ENCODE measurements at regions of chr7 and their contacts with region 1.

Region 1: DNA sequence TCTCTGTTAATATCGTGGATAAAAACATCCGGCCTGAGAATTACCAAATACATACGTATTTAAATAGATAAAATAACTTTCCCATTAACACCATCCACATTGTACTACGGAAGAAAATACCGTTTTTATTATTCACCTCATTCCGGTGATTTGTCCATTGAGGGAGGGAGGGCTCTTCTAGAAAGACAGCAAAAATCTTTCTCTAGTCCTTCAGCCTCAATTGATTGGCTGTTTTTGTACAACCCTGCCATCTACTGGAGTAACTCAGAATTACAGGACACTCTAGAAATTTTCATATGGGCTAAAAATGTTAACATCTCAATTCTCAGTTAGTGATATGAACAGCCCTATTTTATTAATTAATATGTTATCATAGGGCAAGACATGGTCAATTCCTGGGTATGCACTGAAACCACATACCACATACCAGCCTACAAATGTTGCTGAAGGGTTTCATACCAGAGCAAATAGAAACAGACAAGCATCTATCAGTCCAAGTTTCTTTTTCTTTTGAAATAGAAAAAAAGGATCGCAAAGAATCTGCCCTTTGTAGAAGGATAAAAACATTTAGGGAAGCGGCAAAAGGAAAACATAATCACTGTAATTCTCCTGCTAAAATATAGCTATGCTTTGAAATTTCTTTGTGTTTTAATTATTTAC is 55.8 kb upstream of the CDCA7L start:
- DNase-seq: peak; percentile 86
- H3K4me3 ChIP-seq: no peak overlapping the region
- H3K27ac ChIP-seq: peak overlapping the region; percentile 59
- H3K4me1 ChIP-seq: peaks cover 16% of the 10 kb centered on the region
- H3K27me3 ChIP-seq: no peaks in the 10 kb centered on the region
- CTCF ChIP-seq: peak; percentile 51 to 60
- POLR2A ChIP-seq: no peak

Region 2: DNA sequence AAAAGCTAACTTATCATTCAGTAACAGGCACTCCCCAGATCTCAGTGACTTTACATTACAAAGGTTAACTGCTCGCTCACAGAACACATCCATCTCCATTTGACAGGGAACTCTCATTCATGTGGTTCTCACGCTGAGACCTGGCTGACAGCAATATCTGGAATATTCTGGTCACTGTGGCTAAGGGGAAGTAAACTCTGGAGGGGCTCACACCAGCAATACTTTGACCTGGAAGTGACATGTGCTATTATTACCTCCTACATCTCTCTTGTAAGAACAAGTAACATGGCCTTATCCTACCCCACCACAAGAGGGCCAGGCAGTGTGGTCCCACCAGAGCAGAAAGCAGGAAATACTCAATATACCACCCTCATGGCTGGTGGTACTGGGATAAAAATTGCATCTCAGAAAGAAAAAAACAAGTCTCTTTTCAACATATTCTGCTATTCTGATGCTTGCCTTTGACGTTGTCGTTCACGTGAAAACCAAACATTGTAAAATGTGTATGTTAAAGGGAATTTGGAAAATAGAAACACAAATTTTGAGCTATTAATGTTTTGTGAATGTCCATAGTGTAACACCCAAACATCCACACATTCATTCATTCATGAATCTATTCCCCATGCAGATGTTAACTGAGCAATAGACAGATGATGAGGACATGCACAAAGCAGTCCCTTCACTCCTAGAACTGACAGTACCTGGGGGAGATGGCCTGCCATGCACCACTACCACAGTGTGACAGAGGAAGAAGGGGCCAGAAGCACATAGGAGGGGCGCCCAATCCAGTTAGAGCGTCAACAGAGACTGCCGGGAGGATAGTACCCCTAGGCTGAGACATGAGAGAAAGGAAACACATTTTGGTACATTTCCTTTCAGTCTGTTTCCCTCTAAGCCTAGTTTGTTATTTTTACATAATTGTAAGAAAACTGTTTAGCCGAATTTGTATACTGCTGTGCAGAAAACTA is 739.6 kb before region 1 on chr7:
- CTCF ChIA-PET with region 1: no interaction called
- POLR2A ChIA-PET with region 1: no interaction called
- dilution Hi-C with region 1: no loop called
- intact Hi-C with region 1: loop called (anchors 1 kb)
- DNase-seq: peak; percentile 67
- H3K4me3 ChIP-seq: no peak overlapping the region
- H3K27ac ChIP-seq: no peak overlapping the region
- H3K4me1 ChIP-seq: peaks cover 2% of the 10 kb centered on the region
- H3K27me3 ChIP-seq: no peaks in the 10 kb centered on the region
- CTCF ChIP-seq: peak; percentile 67 to 68
- POLR2A ChIP-seq: no peak

Region 3: GRCh38 chr7:21507626-21508343 is 493.7 kb before region 1 on chr7:
- CTCF ChIA-PET with region 1: interaction called, 5 read pairs
- POLR2A ChIA-PET with region 1: no interaction called
- dilution Hi-C with region 1: no loop called
- intact Hi-C with region 1: loop called (anchors 1 kb)
- DNase-seq: peak; percentile 52
- H3K4me3 ChIP-seq: no peak overlapping the region
- H3K27ac ChIP-seq: no peak overlapping the region
- H3K4me1 ChIP-seq: no peaks in the 10 kb centered on the region
- H3K27me3 ChIP-seq: no peaks in the 10 kb centered on the region
- CTCF ChIP-seq: peak; percentile 76
- POLR2A ChIP-seq: no peak

Region 4: DNA sequence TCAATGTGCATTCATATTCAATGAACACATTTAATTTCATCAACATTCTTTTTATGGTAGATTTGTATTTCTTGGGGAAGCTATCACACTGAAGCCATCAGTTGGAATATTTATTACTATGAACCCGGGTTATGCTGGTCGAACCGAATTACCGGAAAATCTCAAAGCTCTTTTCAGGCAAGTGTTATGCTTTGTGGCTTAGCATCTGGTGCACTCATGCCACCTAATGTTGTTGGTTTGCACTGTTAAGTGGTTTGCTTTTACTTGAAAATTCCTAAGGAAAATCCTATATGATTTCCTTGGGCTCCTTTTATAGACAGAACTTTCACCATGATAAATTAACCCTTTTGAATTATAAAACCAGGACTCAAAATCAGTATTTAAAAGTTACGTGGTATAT is 310.8 kb before region 1 on chr7:
- CTCF ChIA-PET with region 1: no interaction called
- POLR2A ChIA-PET with region 1: no interaction called
- dilution Hi-C with region 1: no loop called
- intact Hi-C with region 1: loop called (anchors 1 kb)
- DNase-seq: no peak
- H3K4me3 ChIP-seq: no peak overlapping the region
- H3K27ac ChIP-seq: no peak overlapping the region
- H3K4me1 ChIP-seq: no peaks in the 10 kb centered on the region
- H3K27me3 ChIP-seq: no peaks in the 10 kb centered on the region
- CTCF ChIP-seq: no peak
- POLR2A ChIP-seq: no peak

Region 5: GRCh38 chr7:21898265-21898930 is 103.1 kb before region 1 on chr7:
- CTCF ChIA-PET with region 1: no interaction called
- POLR2A ChIA-PET with region 1: no interaction called
- dilution Hi-C with region 1: no loop called
- intact Hi-C with region 1: loop called (anchors 5 kb)
- DNase-seq: no peak
- H3K4me3 ChIP-seq: no peak overlapping the region
- H3K27ac ChIP-seq: no peak overlapping the region
- H3K4me1 ChIP-seq: peaks cover 21% of the 10 kb centered on the region
- H3K27me3 ChIP-seq: no peaks in the 10 kb centered on the region
- CTCF ChIP-seq: no peak
- POLR2A ChIP-seq: no peak

Region 6: GRCh38 chr7:22333680-22334141 is 332.2 kb after region 1 on chr7:
- CTCF ChIA-PET with region 1: no interaction called
- POLR2A ChIA-PET with region 1: no interaction called
- dilution Hi-C with region 1: no loop called
- intact Hi-C with region 1: no loop called
- DNase-seq: no peak
- H3K4me3 ChIP-seq: no peak overlapping the region
- H3K27ac ChIP-seq: no peak overlapping the region
- H3K4me1 ChIP-seq: no peaks in the 10 kb centered on the region
- H3K27me3 ChIP-seq: no peaks in the 10 kb centered on the region
- CTCF ChIP-seq: no peak
- POLR2A ChIP-seq: no peak